Motor neuron (in vitro differentiated cells): ENCODE measurements at regions of chr5 and their contacts with region 1.

Region 1: DNA sequence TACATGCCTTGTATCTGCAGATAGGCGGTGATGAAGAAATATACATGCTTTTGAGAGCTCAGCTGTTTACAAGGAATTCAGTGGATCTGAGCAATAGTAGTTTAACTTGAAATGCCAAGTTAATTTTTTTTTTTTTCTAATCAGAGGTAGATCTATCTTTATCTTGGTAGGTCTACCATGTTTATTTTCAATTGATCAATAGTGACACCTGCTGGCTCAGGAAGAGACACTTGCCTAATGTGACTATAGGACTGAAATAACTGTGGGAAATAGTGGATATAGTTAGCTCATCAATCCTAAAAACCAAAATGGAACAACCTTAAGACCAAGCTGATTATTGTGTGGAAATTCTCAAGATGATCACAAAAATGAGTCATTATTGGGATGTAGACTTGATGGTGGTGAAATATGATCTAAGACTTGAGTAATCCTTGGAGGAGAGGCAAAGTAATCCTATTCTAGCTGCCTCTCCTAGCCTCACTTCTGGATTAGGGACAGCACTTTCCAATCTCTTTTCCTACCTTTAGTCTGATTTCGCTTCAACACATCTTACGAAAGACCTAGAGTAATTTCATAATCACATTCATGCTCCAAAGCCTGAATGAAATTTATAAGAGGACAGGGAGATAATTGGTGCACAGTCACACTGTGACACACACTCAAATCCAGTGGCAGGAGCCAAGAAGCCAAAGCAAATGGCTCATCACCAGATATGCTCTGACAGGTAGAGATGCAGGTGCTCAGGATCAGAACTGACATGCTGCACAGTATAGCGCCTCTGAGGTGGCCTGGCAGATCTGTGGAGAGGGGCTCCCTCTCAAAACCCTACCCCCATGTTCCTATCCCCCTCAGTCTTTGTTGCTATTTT is 156.3 kb downstream of the HMHB1 start:
- ATAC-seq: peak in 5 of 8 experiments; percentile 42 to 88 (median 83)
- H3K4me3 ChIP-seq: no peak overlapping the region
- H3K27ac ChIP-seq: no peak overlapping the region
- H3K4me1 ChIP-seq: no peaks in the 10 kb centered on the region

Region 2: DNA sequence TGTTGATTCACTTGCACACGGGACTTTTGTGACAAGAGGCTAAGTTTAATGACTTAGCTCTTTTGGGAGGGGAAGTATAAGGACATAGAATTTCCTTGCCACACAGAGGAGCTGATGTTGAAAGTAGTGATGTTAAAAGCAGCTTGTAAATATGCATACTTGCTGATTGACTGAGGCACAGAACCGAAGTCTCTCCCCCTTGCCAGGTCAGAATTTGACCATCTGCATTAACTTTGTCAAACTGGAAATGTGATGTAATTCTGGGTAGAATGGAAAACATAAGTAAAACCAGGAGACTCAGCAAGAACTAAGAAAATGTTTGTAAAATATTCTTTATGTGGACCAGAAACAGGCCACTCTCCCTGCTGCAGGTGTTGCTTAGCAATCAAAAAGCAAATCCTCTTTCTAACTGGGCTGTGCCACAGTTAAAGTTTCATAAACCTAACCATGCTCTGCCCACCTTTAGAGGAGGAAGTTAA is 848.9 kb before region 1 on chr5:
- in situ Hi-C with region 1: no loop called
- ATAC-seq: peak in 3 of 8 experiments; percentile 7 to 68 (median 62)
- H3K4me3 ChIP-seq: no peak overlapping the region
- H3K27ac ChIP-seq: no peak overlapping the region
- H3K4me1 ChIP-seq: no peaks in the 10 kb centered on the region

Region 3: GRCh38 chr5:143648696-143649095 is 319.5 kb before region 1 on chr5:
- in situ Hi-C with region 1: loop called in 1 of 9 experiments (anchors 25 kb)
- ATAC-seq: no peak
- H3K4me3 ChIP-seq: no peak overlapping the region
- H3K27ac ChIP-seq: no peak overlapping the region
- H3K4me1 ChIP-seq: peaks cover 3 to 10% of the 10 kb centered on the region in 2 donors

Region 4: GRCh38 chr5:143770450-143770849 is 197.8 kb before region 1 on chr5:
- in situ Hi-C with region 1: no loop called
- ATAC-seq: no peak
- H3K4me3 ChIP-seq: no peak overlapping the region
- H3K27ac ChIP-seq: no peak overlapping the region
- H3K4me1 ChIP-seq: peaks cover 0 to 2% of the 10 kb centered on the region in 2 donors

Region 5: DNA sequence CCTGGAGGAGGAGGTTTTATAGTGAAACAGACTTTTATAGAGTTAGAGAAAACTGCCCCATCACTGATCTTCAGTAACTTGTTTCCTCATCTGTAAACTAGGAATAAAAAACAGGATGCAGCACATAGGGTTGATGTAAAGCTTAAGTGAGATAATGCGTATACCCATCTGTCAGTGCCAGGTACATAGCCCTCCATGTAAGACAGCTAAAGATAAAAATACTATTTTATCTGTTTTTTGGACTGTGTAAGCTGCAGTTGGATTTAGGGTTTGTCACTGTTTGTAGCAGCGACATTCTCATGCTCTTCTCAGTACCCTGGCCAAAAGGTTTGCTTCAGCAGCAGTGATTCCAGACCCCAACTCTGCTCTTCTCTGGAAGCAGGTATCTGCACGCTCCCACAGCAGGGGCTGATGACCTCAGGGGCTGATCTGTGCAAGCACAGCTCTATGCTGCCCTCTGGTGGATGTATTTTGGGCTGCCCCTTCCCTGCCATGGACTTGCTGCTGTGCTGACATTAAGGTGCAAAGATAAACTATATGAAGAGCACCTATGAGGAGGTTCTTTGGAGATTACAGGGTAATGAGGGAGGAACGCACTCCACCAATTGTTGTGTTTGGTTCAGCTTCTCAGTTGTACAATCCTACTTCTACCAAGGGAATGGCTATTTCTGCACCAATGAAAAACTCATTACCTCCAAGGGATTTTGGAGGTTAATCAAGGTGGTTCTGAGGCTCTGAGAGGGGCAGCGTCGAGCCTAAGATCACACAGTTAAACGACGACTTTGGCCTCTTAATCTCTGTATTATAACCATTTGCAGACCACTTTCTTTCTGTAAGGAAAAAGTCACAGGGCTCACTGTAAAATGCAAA is 143.2 kb before region 1 on chr5:
- in situ Hi-C with region 1: loop called in 1 of 9 experiments (anchors 25 kb)
- ATAC-seq: peak; percentile 90 to 100 (median 91)
- H3K4me3 ChIP-seq: no peak overlapping the region
- H3K27ac ChIP-seq: no peak overlapping the region
- H3K4me1 ChIP-seq: no peaks in the 10 kb centered on the region

Region 6: GRCh38 chr5:144142139-144142823 is 174.0 kb after region 1 on chr5:
- in situ Hi-C with region 1: no loop called
- ATAC-seq: peak; percentile 53 to 99 (median 87)
- H3K4me3 ChIP-seq: no peak overlapping the region
- H3K27ac ChIP-seq: no peak overlapping the region
- H3K4me1 ChIP-seq: peaks cover 9% of the 10 kb centered on the region in 2 donors